GM10248 (cell line): ENCODE measurements at regions of chr10 and their contacts with region 1.

Region 1: DNA sequence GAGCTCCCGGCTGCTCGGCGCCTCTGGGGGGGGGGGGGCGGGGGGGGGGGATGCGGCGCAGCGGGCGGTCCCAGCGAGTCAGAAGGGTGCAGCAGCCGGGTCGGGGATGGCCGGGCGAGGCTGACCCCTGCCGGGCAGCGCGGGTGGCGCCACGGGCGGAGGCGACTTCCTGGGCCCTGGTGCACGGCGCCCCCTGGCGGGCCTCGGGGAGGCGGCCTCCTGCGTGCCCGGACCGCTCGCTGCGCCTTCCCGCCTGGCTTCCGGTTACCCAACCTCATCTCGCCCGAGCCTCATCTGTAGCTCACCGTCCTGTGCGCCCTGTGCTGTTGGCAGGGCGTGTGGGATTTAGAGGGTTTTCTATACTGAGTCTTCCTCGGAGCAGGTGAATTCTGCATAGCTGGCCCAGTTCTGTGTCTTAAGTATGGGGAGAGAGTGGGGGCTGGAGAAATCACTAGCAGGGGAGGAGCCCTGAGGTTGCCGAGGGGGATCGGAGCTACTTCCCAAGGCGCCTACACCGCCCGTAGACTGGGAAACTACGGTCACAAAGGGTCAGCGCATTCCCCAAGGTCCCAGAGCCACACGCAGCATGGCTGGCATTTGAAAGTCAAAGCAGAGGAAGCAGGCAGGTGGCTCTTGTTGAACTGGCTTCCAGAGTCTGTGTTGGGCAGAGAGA is 28.3 kb upstream of the WDFY4 start:
- DNase-seq: peak; percentile 92
- CTCF ChIP-seq: peak; percentile 100

Region 2: DNA sequence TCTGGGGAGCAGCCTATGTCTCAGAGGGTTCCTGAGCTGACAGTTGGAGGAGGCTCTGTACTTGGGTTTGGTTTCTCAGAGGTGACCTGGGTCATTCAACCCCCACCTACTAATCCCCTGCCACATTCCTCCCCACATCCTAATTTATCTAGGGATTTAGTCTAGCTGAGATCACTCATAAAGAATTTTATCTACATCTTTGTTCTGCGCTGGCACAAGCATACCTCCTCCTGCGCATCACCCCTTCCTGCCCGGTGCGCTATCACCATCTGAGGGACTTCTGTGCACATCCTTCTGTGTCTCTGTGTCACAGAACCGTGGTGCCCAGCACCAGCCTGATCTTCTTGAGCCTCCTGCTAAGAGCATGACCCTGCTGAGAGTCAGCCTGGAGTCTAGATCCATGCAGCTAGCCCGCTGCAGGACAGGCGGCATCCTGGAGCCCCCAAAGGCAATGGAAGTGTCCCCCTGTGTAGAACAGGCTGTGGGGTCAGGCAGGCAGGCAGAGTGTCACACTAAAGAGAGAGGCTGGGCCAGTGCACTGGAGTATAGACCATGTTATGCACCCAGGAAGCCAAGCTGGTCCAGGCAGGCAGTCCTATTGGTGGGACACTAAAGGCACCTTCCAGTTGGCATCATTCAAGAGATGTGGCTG is 115.1 kb before region 1 on chr10:
- CTCF ChIA-PET with region 1: interaction called, 336 read pairs
- POLR2A ChIA-PET with region 1: no interaction called
- DNase-seq: no peak
- CTCF ChIP-seq: no peak

Region 3: DNA sequence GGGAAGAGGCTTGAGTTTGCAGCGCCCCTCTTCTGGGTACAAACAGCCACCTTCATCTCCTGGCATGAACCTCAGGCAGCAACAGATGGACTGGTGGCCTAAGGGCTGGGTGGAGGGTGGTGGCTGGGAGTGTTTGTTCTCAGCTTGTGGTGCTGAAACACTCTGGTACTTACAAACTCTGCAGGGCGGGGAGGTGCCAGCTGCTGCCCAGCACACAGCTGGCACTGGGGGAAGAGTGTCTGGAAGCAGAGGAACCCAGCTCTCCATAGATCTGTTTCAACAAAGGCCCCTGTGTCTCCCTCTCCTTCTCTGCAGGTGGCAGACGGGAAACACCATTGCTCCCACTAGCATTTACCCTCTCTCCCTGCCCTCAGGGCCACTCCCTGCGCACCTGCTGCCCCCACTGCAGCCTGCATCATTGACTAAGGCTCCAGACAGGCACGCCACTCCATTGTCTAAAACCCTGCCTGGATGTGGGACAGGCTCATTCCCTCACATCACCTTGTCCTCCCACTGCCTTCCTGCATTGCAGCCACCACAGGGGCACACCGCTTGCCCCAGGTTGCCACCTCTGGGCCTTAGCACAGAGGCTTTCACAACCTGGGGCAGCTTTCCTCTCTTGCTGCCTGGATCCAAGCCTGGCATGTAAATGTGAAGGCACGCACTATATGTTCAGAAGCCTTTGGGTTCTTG is 58.0 kb before region 1 on chr10:
- CTCF ChIA-PET with region 1: interaction called, 14 read pairs
- POLR2A ChIA-PET with region 1: no interaction called
- DNase-seq: no peak
- CTCF ChIP-seq: no peak

Region 4: GRCh38 chr10:48670978-48671913 is 14.9 kb after region 1 on chr10:
- CTCF ChIA-PET with region 1: interaction called, 84 read pairs
- POLR2A ChIA-PET with region 1: no interaction called
- DNase-seq: peak; percentile 85
- CTCF ChIP-seq: no peak

Region 5: DNA sequence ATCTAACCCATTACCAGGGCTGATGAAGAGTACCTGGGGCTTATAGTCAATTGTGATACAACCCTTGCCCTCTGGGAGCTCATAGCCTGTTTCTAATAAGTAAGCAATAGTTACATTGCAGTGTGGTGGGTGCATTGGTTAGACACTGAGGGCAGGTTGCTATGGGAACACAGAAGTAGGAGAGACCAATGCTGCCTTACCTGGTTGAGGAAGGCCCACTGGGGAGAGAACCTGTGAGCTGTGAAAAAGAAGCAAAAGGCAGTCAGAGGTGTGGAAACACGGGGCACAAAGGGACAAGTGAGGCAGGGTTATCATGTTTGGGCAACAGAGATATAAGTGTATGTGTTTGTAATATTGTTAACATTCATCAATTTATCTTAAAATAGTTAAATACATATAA is 80.2 kb after region 1 on chr10:
- CTCF ChIA-PET with region 1: interaction called, 25 read pairs
- POLR2A ChIA-PET with region 1: no interaction called
- DNase-seq: no peak
- CTCF ChIP-seq: no peak

Region 6: GRCh38 chr10:48802611-48803071 is 146.3 kb after region 1 on chr10:
- CTCF ChIA-PET with region 1: interaction called, 47 read pairs
- POLR2A ChIA-PET with region 1: no interaction called
- DNase-seq: peak; percentile 76
- CTCF ChIP-seq: no peak

Region 7: GRCh38 chr10:49512121-49512809 is 855.9 kb after region 1 on chr10:
- CTCF ChIA-PET with region 1: interaction called, 46 read pairs
- POLR2A ChIA-PET with region 1: no interaction called
- DNase-seq: no peak
- CTCF ChIP-seq: peak; percentile 33